ENCODE measurements at regions of chr14 and their contacts with region 1.

Region 1: GRCh38 chr14:76386915-76387782 is 11.2 kb downstream of the ESRRB start:
- DNase-seq: peak; percentile 41 to 95
- H3K4me3 ChIP-seq: peak overlapping the region in 1 of 4 experiments; percentile 28; a peak in 1 of 8 replicates
- H3K27ac ChIP-seq: no peak overlapping the region
- H3K4me1 ChIP-seq: peaks cover 0 to 4% (median 1%) of the 10 kb centered on the region in 4 experiments; a peak in 1 of 7 replicates
- H3K27me3 ChIP-seq: 0 out of 7 replicates have a peak, but pooled peaks cover 0 to 1% (median 0%) of the 10 kb centered on the region in 4 experiments
- CTCF ChIP-seq: peak; percentile 91 to 99 (median 92)
- EP300 ChIP-seq: no peak
- POLR2A ChIP-seq: no peak
- RAD21 ChIP-seq: peak; percentile 95 to 99

Region 2: GRCh38 chr14:76056128-76056527 is 331.0 kb before region 1 on chr14:
- CTCF ChIA-PET with region 1: interaction called, 51 read pairs
- POLR2A ChIA-PET with region 1: no interaction called
- DNase-seq: no peak
- H3K4me3 ChIP-seq: no peak overlapping the region
- H3K27ac ChIP-seq: no peak overlapping the region
- H3K4me1 ChIP-seq: peaks cover 0 to 8% (median 5%) of the 10 kb centered on the region in 4 experiments
- H3K27me3 ChIP-seq: no peaks in the 10 kb centered on the region
- CTCF ChIP-seq: peak; percentile 54 to 72 (median 63)
- EP300 ChIP-seq: no peak
- POLR2A ChIP-seq: no peak
- RAD21 ChIP-seq: peak; percentile 48 to 65; a peak in 3 of 4 replicates

Region 3: GRCh38 chr14:76352639-76353281 is 34.4 kb before region 1 on chr14:
- CTCF ChIA-PET with region 1: interaction called, 28 read pairs
- POLR2A ChIA-PET with region 1: no interaction called
- DNase-seq: peak; percentile 36 to 97
- H3K4me3 ChIP-seq: peak overlapping the region in 1 of 4 experiments; percentile 26; a peak in 1 of 8 replicates
- H3K27ac ChIP-seq: no peak overlapping the region
- H3K4me1 ChIP-seq: peaks cover 0 to 6% (median 3%) of the 10 kb centered on the region in 4 experiments; a peak in 4 of 7 replicates
- H3K27me3 ChIP-seq: peaks cover 2 to 7% (median 5%) of the 10 kb centered on the region in 4 experiments; a peak in 5 of 7 replicates
- CTCF ChIP-seq: peak; percentile 85 to 96 (median 89)
- EP300 ChIP-seq: no peak
- POLR2A ChIP-seq: no peak
- RAD21 ChIP-seq: peak; percentile 89 to 94

Region 4: GRCh38 chr14:76407449-76408150 is 20.5 kb after region 1 on chr14:
- CTCF ChIA-PET with region 1: interaction called, 24 read pairs
- POLR2A ChIA-PET with region 1: interaction called, 3 read pairs
- DNase-seq: no peak
- H3K4me3 ChIP-seq: no peak overlapping the region
- H3K27ac ChIP-seq: no peak overlapping the region
- H3K4me1 ChIP-seq: peaks cover 0 to 11% (median 6%) of the 10 kb centered on the region in 4 experiments; a peak in 6 of 7 replicates
- H3K27me3 ChIP-seq: no peaks in the 10 kb centered on the region
- CTCF ChIP-seq: no peak
- EP300 ChIP-seq: no peak
- POLR2A ChIP-seq: no peak
- RAD21 ChIP-seq: no peak

Region 5: GRCh38 chr14:76647697-76648298 is 260.6 kb after region 1 on chr14:
- CTCF ChIA-PET with region 1: interaction called, 19 read pairs
- POLR2A ChIA-PET with region 1: no interaction called
- DNase-seq: no peak
- H3K4me3 ChIP-seq: no peak overlapping the region
- H3K27ac ChIP-seq: no peak overlapping the region
- H3K4me1 ChIP-seq: peaks cover 0 to 4% (median 1%) of the 10 kb centered on the region in 4 experiments; a peak in 2 of 7 replicates
- H3K27me3 ChIP-seq: no peaks in the 10 kb centered on the region
- CTCF ChIP-seq: peak; percentile 48 to 98 (median 79)
- EP300 ChIP-seq: no peak
- POLR2A ChIP-seq: no peak
- RAD21 ChIP-seq: peak; percentile 77 to 89

Region 6: DNA sequence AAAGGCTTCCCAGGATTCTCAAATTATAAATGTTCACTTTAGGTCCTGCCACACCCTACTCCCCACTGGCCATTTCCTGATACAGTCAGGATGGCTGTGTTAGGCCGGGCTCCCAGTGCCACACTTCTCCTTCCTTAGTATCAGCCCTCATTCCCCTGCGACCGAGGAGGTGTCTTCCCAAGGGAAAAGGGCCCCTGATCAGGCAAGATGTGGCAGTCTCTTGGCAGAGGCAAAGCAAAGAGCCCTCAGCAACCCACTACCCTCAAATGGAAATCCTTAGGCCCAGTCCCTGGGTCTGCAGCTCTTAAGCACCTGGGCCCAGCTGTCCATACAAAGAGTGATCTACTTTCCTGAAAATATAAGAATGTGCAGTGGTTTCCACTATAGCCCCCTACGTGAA is 277.6 kb after region 1 on chr14:
- CTCF ChIA-PET with region 1: no interaction called
- POLR2A ChIA-PET with region 1: no interaction called
- DNase-seq: peak in 1 of 2 experiments; percentile 27
- H3K4me3 ChIP-seq: no peak overlapping the region
- H3K27ac ChIP-seq: no peak overlapping the region
- H3K4me1 ChIP-seq: no peaks in the 10 kb centered on the region; a peak in 1 of 7 replicates
- H3K27me3 ChIP-seq: no peaks in the 10 kb centered on the region; a peak in 1 of 7 replicates
- CTCF ChIP-seq: no peak
- EP300 ChIP-seq: no peak
- POLR2A ChIP-seq: no peak
- RAD21 ChIP-seq: no peak